Common myeloid progenitor, CD34-positive (primary cell): ENCODE measurements at regions of chr13 and their contacts with region 1.

Region 1: DNA sequence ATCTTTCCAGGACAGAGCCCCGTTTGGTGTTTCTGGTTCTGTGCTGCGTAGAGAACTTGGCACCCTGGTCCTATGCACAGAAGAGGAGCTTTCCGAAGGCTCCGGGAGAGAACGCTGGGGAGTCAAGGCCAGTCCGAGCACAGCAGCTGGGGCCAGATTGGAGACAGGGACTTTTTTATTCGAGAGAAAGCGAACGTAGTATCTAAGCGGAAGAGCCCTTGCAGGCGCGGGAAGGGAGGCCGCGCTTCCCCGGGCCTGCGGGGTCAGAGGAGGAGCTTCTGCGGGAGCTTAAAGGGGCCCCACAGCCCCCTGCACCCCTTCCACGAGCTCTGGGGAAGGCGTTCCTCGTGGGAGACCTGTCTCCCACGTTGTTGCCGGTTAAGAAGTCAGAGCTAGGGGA is 48.6 kb upstream of the ARHGEF7 start:
- DNase-seq: peak in 2 of 3 donors; percentile 7 to 18
- H3K4me3 ChIP-seq: no peak overlapping the region
- H3K27ac ChIP-seq: no peak overlapping the region
- H3K4me1 ChIP-seq: peaks cover 0 to 7% (median 7%) of the 10 kb centered on the region in 4 experiments
- H3K27me3 ChIP-seq: peaks cover 3 to 56% (median 28%) of the 10 kb centered on the region in 5 experiments

Region 2: GRCh38 chr13:110850840-110851239 is 215.7 kb before region 1 on chr13:
- CTCF ChIA-PET with region 1: no interaction called
- POLR2A ChIA-PET with region 1: no interaction called
- DNase-seq: no peak
- H3K4me3 ChIP-seq: no peak overlapping the region
- H3K27ac ChIP-seq: no peak overlapping the region
- H3K4me1 ChIP-seq: peaks cover 0 to 3% (median 0%) of the 10 kb centered on the region in 4 experiments
- H3K27me3 ChIP-seq: peaks cover 0 to 14% (median 0%) of the 10 kb centered on the region in 5 experiments

Region 3: GRCh38 chr13:111228262-111229144 is 162.0 kb after region 1 on chr13:
- CTCF ChIA-PET with region 1: interaction called, 24 read pairs
- POLR2A ChIA-PET with region 1: no interaction called
- DNase-seq: no peak
- H3K4me3 ChIP-seq: no peak overlapping the region
- H3K27ac ChIP-seq: no peak overlapping the region
- H3K4me1 ChIP-seq: no peaks in the 10 kb centered on the region
- H3K27me3 ChIP-seq: no peaks in the 10 kb centered on the region